Motor neuron (in vitro differentiated cells): ENCODE measurements at regions of chr18 and their contacts with region 1.

Region 1: GRCh38 chr18:55415258-55415871 is 172.6 kb downstream of the TCF4 start:
- ATAC-seq: peak; percentile 79 to 97 (median 84)
- H3K4me3 ChIP-seq: no peak overlapping the region
- H3K27ac ChIP-seq: no peak overlapping the region
- H3K4me1 ChIP-seq: peaks cover 16 to 19% of the 10 kb centered on the region in 2 donors

Region 2: DNA sequence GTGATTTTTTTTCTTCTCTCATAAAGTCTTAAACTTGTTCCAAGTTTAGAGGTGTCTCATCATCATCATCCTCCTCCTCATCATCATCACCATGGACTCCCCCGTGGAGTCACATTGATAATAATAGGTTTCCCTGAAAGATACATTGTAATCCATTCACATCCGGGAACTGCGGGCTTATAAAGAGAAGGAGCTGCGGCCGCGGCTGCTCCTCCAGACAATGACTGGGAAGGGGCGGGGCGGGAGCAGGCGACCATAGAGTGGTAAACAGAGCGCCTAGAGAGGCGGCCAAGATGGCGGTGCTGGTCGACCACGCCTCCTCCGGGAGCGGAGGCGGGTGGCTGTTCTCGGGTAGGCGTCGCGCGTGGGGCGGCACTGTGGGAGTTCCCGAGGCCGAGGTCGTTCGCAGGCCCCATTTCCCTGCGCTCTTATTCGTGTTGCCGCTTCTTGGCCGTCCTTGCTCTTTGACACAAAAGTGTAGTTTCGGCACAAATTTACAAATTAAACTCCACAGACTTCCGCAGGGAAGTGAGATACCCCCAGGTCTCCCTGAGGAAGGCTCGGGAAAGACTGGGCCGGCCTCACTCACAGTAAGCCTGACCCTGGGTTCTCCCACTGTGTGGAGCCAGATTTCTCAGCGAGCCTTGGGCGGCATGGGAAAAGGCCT is 174.4 kb after region 1 on chr18:
- in situ Hi-C with region 1: loop called in 2 of 9 experiments (anchors 25 kb)
- ATAC-seq: peak; percentile 81 to 91 (median 86)
- H3K4me3 ChIP-seq: peak overlapping the region; percentile 64 to 98 (median 71)
- H3K27ac ChIP-seq: peak overlapping the region; percentile 63 to 73
- H3K4me1 ChIP-seq: peaks cover 5 to 13% of the 10 kb centered on the region in 2 donors